IMR-90 (cell line): ENCODE measurements at regions of chr10 and their contacts with region 1.

Region 1: DNA sequence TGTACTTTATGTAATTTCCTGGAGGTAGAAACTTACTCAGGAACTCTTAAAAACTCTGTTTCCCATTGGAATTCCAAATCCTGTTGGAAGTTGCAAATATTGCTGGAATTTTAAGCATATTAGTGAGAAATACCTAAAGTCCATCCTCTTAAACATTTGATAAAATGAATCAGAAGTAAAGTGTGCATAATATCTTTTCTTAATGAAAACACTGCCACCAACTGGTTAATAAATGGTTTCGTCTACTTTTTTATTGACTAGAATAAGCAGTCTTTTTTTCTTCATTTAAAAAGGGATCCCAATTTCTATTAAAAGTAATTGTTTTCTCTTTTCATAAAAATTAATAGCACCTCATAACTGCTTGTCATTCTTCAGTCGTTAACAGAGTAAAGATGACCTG is 28.3 kb downstream of the NPS start:
- DNase-seq: peak; percentile 25
- ATAC-seq: 0 out of 2 replicates have a peak, but pooled peaks have one; percentile 35
- H3K4me3 ChIP-seq: no peak overlapping the region
- H3K27ac ChIP-seq: no peak overlapping the region
- H3K4me1 ChIP-seq: no peaks in the 10 kb centered on the region
- H3K27me3 ChIP-seq: no peaks in the 10 kb centered on the region
- CTCF ChIP-seq: peak; percentile 38; the same call in 1 of the 2 replicates
- POLR2A ChIP-seq: no peak
- RAD21 ChIP-seq: no peak

Region 2: DNA sequence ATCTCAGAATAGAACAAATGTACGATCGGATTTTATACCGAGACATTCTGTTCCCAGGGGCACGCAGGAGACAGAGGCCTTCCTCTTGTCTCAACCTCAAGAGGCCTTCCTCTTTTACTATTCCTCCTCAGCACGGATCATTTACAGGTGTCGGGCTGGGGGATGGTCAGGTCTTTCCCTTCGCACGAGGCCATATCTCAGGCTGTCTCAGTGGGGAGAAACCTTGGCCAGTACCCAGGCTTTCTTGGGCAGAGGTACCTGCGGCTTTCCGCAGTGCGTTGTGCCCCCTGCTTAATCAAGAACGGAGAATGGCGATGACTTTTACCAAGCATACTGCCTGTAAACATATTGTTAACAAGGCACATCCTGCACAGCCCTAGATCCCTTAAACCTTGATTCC is 1636.9 kb before region 1 on chr10:
- CTCF ChIA-PET with region 1: no interaction called
- POLR2A ChIA-PET with region 1: no interaction called
- dilution Hi-C with region 1: no loop called
- in situ Hi-C with region 1: no loop called
- intact Hi-C with region 1: loop called (anchors 10 kb)
- DNase-seq: no peak
- ATAC-seq: no peak
- H3K4me3 ChIP-seq: no peak overlapping the region
- H3K27ac ChIP-seq: no peak overlapping the region
- H3K4me1 ChIP-seq: no peaks in the 10 kb centered on the region
- H3K27me3 ChIP-seq: no peaks in the 10 kb centered on the region
- CTCF ChIP-seq: no peak
- POLR2A ChIP-seq: no peak
- RAD21 ChIP-seq: no peak

Region 3: DNA sequence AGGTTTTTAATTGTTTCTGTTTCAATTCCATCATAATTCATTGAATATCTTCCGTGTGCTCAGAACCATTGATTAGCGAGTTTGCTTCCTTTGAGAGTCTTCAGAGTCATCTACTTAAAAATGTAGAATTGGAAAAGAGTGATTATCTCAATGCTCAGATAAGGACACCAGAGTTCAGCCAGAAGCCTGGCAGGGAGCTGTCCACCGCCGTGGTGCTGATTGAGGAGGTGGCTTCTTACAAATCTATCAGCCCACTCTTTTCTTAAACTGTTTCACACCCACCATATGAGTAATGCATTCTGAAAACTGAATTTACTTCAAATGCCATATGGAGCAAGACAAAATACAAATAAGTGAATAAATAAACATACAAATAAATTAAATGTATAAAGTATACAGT is 460.3 kb before region 1 on chr10:
- CTCF ChIA-PET with region 1: interaction called, 3 read pairs
- POLR2A ChIA-PET with region 1: no interaction called
- dilution Hi-C with region 1: no loop called
- in situ Hi-C with region 1: no loop called
- intact Hi-C with region 1: loop called (anchors 10 kb)
- DNase-seq: peak; percentile 64
- ATAC-seq: peak; percentile 80
- H3K4me3 ChIP-seq: no peak overlapping the region
- H3K27ac ChIP-seq: no peak overlapping the region
- H3K4me1 ChIP-seq: no peaks in the 10 kb centered on the region
- H3K27me3 ChIP-seq: no peaks in the 10 kb centered on the region
- CTCF ChIP-seq: no peak
- POLR2A ChIP-seq: no peak
- RAD21 ChIP-seq: peak; percentile 28; the same call in 1 of the 2 replicates

Region 4: DNA sequence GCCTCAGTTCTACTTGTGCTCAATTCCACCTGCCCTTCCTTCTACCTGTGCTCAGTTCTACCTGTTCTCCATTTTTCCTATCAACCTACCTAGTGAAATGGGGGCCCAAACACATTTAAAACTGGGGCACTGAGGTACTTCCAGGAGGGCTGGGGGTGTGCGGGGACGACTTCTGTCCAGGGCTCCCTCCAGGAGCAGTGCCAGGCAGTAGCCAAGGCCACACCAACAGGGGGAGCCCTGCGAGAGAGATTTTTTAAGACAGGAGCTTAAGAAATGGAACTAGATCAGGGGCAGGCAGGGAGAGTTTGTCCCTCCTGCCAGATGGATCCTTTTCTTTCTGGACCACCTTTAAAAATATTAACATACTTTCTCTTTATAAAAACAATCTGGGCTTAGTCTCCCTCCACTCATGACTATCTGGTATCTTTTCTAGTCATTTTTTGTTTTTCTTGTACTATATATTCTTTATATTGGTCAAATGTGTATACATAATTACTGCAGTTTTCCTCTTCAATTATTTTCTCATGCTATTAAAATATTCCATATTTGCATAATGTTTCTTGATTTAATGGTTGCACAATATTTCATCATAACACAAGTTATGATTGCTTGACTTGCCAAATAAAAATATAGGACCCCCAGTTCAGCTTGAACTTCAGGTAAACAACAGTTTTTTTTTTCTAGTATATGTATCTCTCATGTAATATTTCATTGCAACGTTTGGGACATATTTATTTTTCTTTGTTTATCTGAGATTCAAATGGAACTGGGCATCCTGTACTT is 333.7 kb before region 1 on chr10:
- CTCF ChIA-PET with region 1: no interaction called
- POLR2A ChIA-PET with region 1: no interaction called
- dilution Hi-C with region 1: no loop called
- in situ Hi-C with region 1: no loop called
- intact Hi-C with region 1: loop called (anchors 1 kb)
- DNase-seq: peak; percentile 30
- ATAC-seq: peak; percentile 62
- H3K4me3 ChIP-seq: no peak overlapping the region
- H3K27ac ChIP-seq: no peak overlapping the region
- H3K4me1 ChIP-seq: peaks cover 3% of the 10 kb centered on the region; the same call in 1 of the 2 replicates
- H3K27me3 ChIP-seq: no peaks in the 10 kb centered on the region
- CTCF ChIP-seq: peak; percentile 51
- POLR2A ChIP-seq: no peak
- RAD21 ChIP-seq: peak; percentile 37; the same call in 1 of the 2 replicates

Region 5: DNA sequence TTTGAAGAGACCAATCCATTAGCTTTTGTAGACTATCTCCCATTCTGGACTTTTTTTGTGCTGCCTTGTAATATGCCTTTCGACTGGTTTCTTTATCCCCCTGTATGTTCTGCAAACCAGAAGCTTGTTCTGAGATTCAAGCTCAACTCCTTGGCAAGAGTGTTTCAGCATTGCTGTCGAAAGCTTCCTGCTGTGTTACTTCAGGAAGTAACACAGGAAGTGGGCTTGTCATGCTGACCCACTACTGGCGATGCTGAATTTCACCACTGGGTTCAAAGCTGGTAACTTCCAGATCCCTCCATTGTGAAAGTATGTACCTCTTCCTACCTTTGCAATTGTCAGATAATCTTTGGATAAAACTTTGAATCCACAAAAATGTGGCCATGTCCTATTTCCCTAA is 323.1 kb before region 1 on chr10:
- CTCF ChIA-PET with region 1: no interaction called
- POLR2A ChIA-PET with region 1: no interaction called
- dilution Hi-C with region 1: no loop called
- in situ Hi-C with region 1: no loop called
- intact Hi-C with region 1: no loop called
- DNase-seq: no peak
- ATAC-seq: no peak
- H3K4me3 ChIP-seq: no peak overlapping the region
- H3K27ac ChIP-seq: no peak overlapping the region
- H3K4me1 ChIP-seq: no peaks in the 10 kb centered on the region
- H3K27me3 ChIP-seq: no peaks in the 10 kb centered on the region
- CTCF ChIP-seq: no peak
- POLR2A ChIP-seq: no peak
- RAD21 ChIP-seq: no peak